GM12878 (cell line): ENCODE measurements at regions of chr3 and their contacts with region 1.

Region 1: DNA sequence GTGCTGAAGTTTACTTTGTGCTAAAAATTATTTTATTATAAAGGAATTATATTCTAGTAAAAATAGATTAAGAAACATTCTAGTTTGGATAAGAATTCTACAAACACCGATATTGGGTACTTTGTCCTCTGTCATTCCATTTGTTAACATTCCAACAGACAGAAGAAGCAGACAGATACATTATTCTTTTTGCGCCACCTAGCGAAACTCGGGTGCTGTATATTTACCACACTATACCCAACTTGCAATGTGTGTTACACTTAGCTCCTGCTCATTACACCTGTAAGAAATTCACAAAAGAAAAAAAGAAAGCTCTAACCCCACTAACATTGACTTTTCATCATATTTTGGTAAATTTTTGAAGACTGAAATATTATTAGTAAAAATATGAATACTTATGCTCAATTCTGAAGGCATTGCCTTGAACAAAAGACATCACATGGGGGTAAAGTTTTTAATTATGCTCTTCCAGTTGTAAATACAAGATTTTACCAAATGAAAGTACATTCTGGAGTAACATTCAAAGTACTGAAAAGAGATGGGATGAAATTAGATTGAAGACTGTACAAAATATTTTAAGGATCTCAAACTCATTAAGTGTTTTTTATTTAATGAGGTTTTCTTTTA is 136.5 kb upstream of the MLF1 start:
- DNase-seq: peak; percentile 40
- ATAC-seq: peak; percentile 96
- H3K4me3 ChIP-seq: no peak overlapping the region
- H3K27ac ChIP-seq: no peak overlapping the region
- H3K4me1 ChIP-seq: no peaks in the 10 kb centered on the region
- H3K27me3 ChIP-seq: no peaks in the 10 kb centered on the region
- CTCF ChIP-seq: peak; percentile 58 to 88 (median 68); a peak in 4 of 6 replicates
- EP300 ChIP-seq: no peak
- POLR2A ChIP-seq: no peak
- RAD21 ChIP-seq: peak; percentile 94

Region 2: DNA sequence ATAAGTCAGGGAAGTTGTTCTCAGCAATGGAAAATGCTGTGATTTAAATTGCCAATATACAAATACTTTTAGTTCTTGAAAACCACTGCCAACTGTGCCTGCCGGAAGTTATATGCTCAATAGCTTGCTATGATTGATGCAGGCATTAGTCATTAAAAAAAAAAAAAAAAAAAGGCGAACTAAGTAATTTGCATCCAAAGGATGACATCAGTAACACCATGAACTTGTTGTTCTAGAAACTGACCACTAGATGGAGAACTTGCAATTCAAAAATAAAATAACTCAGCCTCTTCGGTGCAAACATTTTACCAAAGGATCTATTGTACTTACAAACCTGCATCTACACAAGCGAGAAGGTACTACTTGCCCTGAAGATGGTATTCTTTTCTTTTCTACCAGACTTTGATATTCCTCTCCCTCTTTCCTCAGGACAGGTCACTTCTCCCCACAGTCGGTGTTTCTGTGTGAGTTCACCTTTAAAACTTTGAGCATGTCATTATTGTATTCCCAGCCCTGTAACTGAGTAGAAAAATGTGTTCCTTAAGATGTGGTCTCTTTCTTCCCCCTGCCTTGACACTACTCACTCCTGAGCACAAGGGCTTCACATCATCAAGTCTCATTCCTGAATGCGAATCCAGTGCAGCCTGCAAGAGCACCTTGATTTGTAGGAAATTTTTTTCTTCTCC is 816.3 kb before region 1 on chr3:
- CTCF ChIA-PET with region 1: interaction called, 11 read pairs
- POLR2A ChIA-PET with region 1: no interaction called
- RAD21 ChIA-PET with region 1: interaction called, 3 read pairs
- SMC1A ChIA-PET with region 1: interaction called, 7 read pairs
- in situ Hi-C with region 1: no loop called
- intact Hi-C with region 1: loop called (anchors 1 kb)
- DNase-seq: peak; percentile 12
- ATAC-seq: peak; percentile 90
- H3K4me3 ChIP-seq: no peak overlapping the region
- H3K27ac ChIP-seq: no peak overlapping the region
- H3K4me1 ChIP-seq: no peaks in the 10 kb centered on the region
- H3K27me3 ChIP-seq: no peaks in the 10 kb centered on the region
- CTCF ChIP-seq: peak; percentile 55 to 62 (median 56); a peak in 5 of 6 replicates
- EP300 ChIP-seq: no peak
- POLR2A ChIP-seq: no peak
- RAD21 ChIP-seq: peak; percentile 68

Region 3: GRCh38 chr3:158097593-158098308 is 336.8 kb before region 1 on chr3:
- CTCF ChIA-PET with region 1: interaction called, 18 read pairs
- POLR2A ChIA-PET with region 1: no interaction called
- RAD21 ChIA-PET with region 1: interaction called, 9 read pairs
- SMC1A ChIA-PET with region 1: interaction called, 5 read pairs
- in situ Hi-C with region 1: no loop called
- intact Hi-C with region 1: no loop called
- DNase-seq: peak; percentile 54
- ATAC-seq: peak; percentile 95
- H3K4me3 ChIP-seq: peak overlapping the region; percentile 85
- H3K27ac ChIP-seq: no peak overlapping the region
- H3K4me1 ChIP-seq: peaks cover 6% of the 10 kb centered on the region; the same call in 1 of the 2 replicates
- H3K27me3 ChIP-seq: peaks cover 2 to 20% of the 10 kb centered on the region in 2 experiments
- CTCF ChIP-seq: no peak
- EP300 ChIP-seq: no peak
- POLR2A ChIP-seq: peak; percentile 69
- RAD21 ChIP-seq: no peak

Region 4: GRCh38 chr3:158313338-158313927 is 121.1 kb before region 1 on chr3:
- CTCF ChIA-PET with region 1: interaction called, 56 read pairs
- POLR2A ChIA-PET with region 1: no interaction called
- RAD21 ChIA-PET with region 1: interaction called, 47 read pairs
- SMC1A ChIA-PET with region 1: interaction called, 60 read pairs
- in situ Hi-C with region 1: no loop called
- intact Hi-C with region 1: loop called (anchors 5 kb)
- DNase-seq: no peak
- ATAC-seq: peak; percentile 82
- H3K4me3 ChIP-seq: no peak overlapping the region
- H3K27ac ChIP-seq: no peak overlapping the region
- H3K4me1 ChIP-seq: peaks cover 4% of the 10 kb centered on the region; the same call in 1 of the 2 replicates
- H3K27me3 ChIP-seq: no peaks in the 10 kb centered on the region
- CTCF ChIP-seq: peak; percentile 48 to 71 (median 59); a peak in 5 of 6 replicates
- EP300 ChIP-seq: no peak
- POLR2A ChIP-seq: no peak
- RAD21 ChIP-seq: peak; percentile 79

Region 5: DNA sequence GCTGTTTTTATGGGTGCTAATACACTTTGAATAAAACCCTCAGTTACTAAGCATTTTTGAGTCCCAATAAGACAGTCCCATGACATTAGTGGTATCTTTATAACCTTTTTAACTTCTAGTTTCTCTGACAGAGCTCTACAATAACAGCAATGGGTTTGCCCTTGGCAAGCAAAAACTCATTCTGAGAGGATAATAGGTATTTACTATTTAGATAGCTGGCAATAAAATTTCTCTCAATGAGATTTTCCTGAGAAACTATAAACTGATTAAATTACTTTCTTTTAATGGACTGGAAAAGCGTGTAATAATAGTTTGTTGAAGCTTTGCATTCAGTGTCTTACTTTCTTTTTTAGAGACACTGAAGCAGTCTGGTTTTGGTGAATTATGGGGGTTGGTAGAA is 31.5 kb before region 1 on chr3:
- CTCF ChIA-PET with region 1: interaction called, 14 read pairs
- POLR2A ChIA-PET with region 1: no interaction called
- RAD21 ChIA-PET with region 1: interaction called, 3 read pairs
- SMC1A ChIA-PET with region 1: interaction called, 6 read pairs
- in situ Hi-C with region 1: no loop called
- intact Hi-C with region 1: no loop called
- DNase-seq: no peak
- ATAC-seq: no peak
- H3K4me3 ChIP-seq: no peak overlapping the region
- H3K27ac ChIP-seq: no peak overlapping the region
- H3K4me1 ChIP-seq: no peaks in the 10 kb centered on the region
- H3K27me3 ChIP-seq: no peaks in the 10 kb centered on the region
- CTCF ChIP-seq: no peak
- EP300 ChIP-seq: no peak
- POLR2A ChIP-seq: no peak
- RAD21 ChIP-seq: no peak

Region 6: DNA sequence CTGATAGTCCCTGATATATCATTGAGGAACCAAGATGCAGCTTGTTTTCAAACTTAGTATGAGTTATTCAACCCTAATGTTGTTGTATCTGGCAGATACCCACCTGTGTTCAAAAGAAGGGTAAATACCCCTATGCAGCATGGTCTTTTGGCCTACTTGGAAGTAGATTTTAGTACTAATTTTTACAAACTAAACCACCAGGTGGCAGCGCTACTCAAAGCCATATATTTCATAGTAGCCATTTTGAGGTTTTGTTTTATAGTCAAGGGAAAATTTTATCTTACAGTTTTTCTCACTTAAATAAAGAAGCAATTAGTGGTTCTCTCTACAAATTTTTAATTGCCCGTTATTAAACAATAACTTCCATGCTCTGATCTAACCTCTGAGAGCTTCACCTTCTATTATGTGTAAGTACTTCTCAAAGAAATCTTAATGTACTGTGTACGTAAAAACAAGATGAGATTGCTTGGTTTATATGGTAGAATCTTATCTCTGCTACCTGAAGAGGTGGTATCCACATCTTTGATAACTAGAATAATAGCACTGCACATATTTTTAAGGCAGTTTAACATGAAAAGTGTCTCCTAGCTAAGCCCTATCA is 105.0 kb after region 1 on chr3:
- CTCF ChIA-PET with region 1: interaction called, 11 read pairs
- POLR2A ChIA-PET with region 1: no interaction called
- RAD21 ChIA-PET with region 1: no interaction called
- SMC1A ChIA-PET with region 1: interaction called, 6 read pairs
- in situ Hi-C with region 1: no loop called
- intact Hi-C with region 1: no loop called
- DNase-seq: no peak
- ATAC-seq: peak; percentile 87
- H3K4me3 ChIP-seq: no peak overlapping the region
- H3K27ac ChIP-seq: no peak overlapping the region
- H3K4me1 ChIP-seq: no peaks in the 10 kb centered on the region
- H3K27me3 ChIP-seq: no peaks in the 10 kb centered on the region
- CTCF ChIP-seq: peak; percentile 39 to 47 (median 46); a peak in 4 of 6 replicates
- EP300 ChIP-seq: no peak
- POLR2A ChIP-seq: no peak
- RAD21 ChIP-seq: peak; percentile 42; the same call in 1 of the 2 replicates